PC-9 (cell line): ENCODE measurements at regions of chr12 and their contacts with region 1.

Region 1: GRCh38 chr12:26777236-26777635 is 55.8 kb downstream of the ITPR2 start:
- DNase-seq: no peak
- H3K4me3 ChIP-seq: no peak overlapping the region
- H3K27ac ChIP-seq: no peak overlapping the region
- H3K4me1 ChIP-seq: no peaks in the 10 kb centered on the region
- H3K27me3 ChIP-seq: no peaks in the 10 kb centered on the region
- CTCF ChIP-seq: no peak

Region 2: DNA sequence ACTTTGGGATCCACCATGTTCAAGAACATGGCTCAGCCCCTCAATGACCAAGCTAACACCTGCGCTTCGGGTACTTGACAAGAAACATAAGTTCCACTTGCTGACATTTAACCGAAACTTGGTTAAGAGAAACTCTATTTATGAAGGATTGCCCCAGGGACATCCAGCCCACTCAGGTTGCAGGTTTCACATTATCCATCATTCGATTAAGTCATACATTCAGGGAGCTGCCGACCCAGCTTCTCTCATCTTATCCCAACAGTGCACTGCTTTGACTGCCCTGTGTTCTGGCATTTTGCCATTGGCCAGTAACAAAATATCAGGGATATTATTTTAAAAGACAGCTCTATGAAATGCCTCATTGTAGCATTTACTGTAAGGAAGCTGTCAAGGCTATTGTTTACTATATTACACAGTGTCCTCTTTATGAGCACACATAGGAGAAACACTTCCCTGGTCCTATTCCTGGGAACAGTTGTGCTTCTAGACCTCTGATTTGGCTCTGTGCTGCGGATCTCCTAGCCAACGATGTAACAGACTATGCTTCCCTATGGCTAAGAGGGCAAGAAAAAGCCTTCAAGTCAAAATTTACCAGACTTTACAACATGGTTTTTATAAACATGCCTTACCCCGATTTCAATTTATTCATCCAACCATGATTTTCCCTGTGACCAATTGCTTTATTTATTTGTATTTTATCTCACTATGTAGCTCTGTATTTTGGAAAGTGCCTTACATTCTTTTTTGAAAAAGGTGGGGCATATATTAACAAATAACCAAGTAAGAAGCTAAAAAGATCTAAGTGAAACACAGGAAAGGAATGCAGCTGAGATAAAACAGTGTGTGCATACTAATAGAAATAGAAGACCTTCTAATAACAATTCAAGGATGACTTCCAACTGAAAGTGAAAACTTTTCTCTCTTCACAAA is 53.6 kb before region 1 on chr12:
- CTCF ChIA-PET with region 1: no interaction called
- POLR2A ChIA-PET with region 1: interaction called, 11 read pairs
- intact Hi-C with region 1: no loop called
- DNase-seq: peak in 1 of 2 experiments; percentile 47
- H3K4me3 ChIP-seq: no peak overlapping the region
- H3K27ac ChIP-seq: no peak overlapping the region
- H3K4me1 ChIP-seq: no peaks in the 10 kb centered on the region; the same call in 1 of the 2 replicates
- H3K27me3 ChIP-seq: no peaks in the 10 kb centered on the region
- CTCF ChIP-seq: no peak

Region 3: DNA sequence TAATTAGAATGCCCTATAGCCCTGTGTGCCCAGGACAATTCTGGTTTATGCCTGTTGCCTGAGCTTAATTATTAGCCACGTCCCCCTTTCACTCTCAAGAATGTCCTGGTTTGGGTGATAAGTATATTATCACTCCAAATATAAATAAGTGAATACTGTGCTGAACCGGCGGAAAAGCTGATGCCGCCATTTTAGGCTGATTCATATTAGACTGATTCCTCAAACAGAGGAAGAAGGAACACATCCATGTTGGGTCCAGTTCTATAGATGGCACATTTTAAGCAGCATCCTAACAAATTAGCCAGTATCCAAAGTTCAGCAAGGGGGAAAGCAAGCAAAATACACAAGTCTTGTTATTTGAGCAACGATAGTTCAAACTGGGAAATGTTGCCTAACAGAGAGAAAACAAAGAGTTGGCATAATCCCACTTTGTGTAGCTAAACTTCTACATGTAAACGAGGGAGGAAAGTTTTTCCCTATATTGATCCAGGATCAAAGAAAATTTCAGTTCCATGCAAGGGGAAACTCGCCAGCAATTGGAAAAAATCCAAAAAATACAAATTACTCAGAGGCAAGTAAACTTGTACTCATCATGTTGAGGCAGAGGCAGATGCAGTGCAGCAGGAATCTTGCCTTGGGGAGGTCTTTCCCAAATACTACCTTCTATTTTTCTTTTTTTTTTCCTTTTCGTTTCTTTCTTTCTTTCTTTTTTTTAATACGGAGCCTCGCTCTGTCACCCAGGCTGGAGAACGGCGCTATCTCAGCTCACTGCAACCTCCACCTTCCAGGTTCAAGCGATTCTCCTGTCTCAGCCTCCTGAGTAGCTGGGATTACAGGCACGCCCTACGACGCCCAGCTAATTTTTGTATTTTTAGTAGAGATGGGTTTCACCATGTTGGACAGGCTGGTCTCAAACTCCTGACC is 40.4 kb before region 1 on chr12:
- CTCF ChIA-PET with region 1: no interaction called
- POLR2A ChIA-PET with region 1: no interaction called
- intact Hi-C with region 1: no loop called
- DNase-seq: no peak
- H3K4me3 ChIP-seq: no peak overlapping the region
- H3K27ac ChIP-seq: no peak overlapping the region
- H3K4me1 ChIP-seq: no peaks in the 10 kb centered on the region
- H3K27me3 ChIP-seq: no peaks in the 10 kb centered on the region
- CTCF ChIP-seq: no peak

Region 4: DNA sequence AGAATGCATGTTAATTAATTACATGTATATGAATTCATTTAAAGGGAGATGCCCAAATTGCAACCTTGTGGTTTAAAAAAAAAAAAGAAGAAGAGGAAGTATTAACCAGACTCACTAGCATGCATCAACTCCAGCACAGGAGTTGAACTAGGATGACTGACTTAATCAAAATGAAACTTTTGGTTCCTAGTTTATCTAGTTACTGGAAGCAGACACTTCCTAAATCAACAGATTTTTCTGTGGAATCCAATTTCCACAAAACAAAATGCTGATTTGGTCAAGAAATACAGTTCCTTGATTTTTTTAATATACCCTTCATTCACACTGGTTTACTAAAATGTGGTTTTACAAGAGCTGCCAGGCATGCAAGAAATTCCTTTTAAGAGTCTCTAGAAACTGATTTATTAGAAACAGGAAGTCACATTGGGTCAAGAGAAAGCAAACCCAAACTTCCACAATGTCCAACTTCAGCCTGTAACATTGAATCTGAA is 14.1 kb after region 1 on chr12:
- CTCF ChIA-PET with region 1: no interaction called
- POLR2A ChIA-PET with region 1: no interaction called
- intact Hi-C with region 1: no loop called
- DNase-seq: no peak
- H3K4me3 ChIP-seq: no peak overlapping the region
- H3K27ac ChIP-seq: no peak overlapping the region
- H3K4me1 ChIP-seq: peaks cover 9% of the 10 kb centered on the region; the same call in 1 of the 2 replicates
- H3K27me3 ChIP-seq: no peaks in the 10 kb centered on the region
- CTCF ChIP-seq: no peak